Heart left ventricle (tissue), 16 donors: ENCODE measurements at regions of chr3 and their contacts with region 1.

Region 1: GRCh38 chr3:17645072-17645698 is 97.2 kb downstream of the TBC1D5 start:
- DNase-seq: peak in 1 of 5 donors; percentile 14
- ATAC-seq: peak in 3 of 4 donors; percentile 50 to 66 (median 53)
- H3K4me3 ChIP-seq: no peak overlapping the region
- H3K27ac ChIP-seq: no peak overlapping the region
- H3K4me1 ChIP-seq: peaks cover 0 to 23% (median 5%) of the 10 kb centered on the region in 12 donors
- H3K27me3 ChIP-seq: no peaks in the 10 kb centered on the region
- CTCF ChIP-seq: peak; percentile 48 to 80 (median 72)
- POLR2A ChIP-seq: no peak

Region 2: GRCh38 chr3:17623464-17623863 is 21.7 kb before region 1 on chr3:
- intact Hi-C with region 1: no loop called
- DNase-seq: no peak
- ATAC-seq: no peak
- H3K4me3 ChIP-seq: no peak overlapping the region
- H3K27ac ChIP-seq: no peak overlapping the region
- H3K4me1 ChIP-seq: peaks cover 0 to 14% (median 0%) of the 10 kb centered on the region in 12 donors
- H3K27me3 ChIP-seq: no peaks in the 10 kb centered on the region
- CTCF ChIP-seq: no peak
- POLR2A ChIP-seq: no peak

Region 3: GRCh38 chr3:17742108-17742879 is 97.1 kb after region 1 on chr3 and contains the start of gene TBC1D5:
- intact Hi-C with region 1: loop called in 4 of 10 experiments (anchors 2 to 10 kb)
- DNase-seq: peak; percentile 95 to 98 (median 98)
- ATAC-seq: peak; percentile 95 to 97 (median 96)
- H3K4me3 ChIP-seq: peak within 1 kb of the TSS; percentile 69 to 93 (median 84)
- H3K27ac ChIP-seq: peak within 1 kb of the TSS; percentile 93 to 100 (median 96)
- H3K4me1 ChIP-seq: peaks cover 0 to 53% (median 21%) of the 10 kb centered on the region in 12 donors
- H3K27me3 ChIP-seq: no peaks in the 10 kb centered on the region
- CTCF ChIP-seq: no peak
- POLR2A ChIP-seq: peak in 1 of 2 donors; percentile 76
- total RNA-seq, gene TBC1D5: 23.4 to 48.3 (median 31.7) TPM

Region 4: DNA sequence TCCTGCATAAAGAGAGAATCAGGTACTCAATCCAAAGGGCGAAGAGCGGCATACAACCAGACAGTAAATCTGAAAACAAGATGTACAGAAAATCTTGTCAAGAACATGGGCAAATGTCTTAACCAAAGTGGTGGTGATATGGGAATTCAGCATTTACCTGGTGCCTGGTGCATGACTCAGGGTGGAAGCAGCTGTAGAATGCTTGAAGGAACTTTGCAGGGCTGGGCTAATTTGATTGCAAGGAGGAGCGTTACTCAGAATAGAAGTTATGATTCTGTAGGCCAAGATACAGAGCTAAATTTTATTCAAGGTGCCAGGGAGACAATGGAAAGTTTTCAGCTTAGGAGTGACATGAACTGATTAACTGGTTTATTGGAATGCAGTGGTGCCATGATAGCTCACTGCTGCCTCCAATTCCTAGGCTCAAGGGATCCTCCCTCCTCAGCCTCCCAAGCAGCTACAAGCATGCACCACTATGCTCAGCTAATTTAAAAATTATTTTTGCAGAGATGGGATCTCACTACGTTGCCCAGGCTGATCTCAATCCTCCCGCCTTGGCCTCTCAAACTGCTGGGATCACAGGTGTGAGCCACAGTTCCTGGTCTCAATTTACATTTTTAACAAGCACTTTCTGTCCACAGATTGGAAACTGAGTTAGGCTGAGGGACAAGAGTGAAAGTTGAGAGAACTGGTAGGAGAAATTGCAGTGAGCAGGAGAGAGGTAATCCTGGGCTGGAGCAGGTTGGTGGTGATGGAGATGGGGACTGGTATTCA is 188.8 kb after region 1 on chr3:
- intact Hi-C with region 1: no loop called
- DNase-seq: no peak
- ATAC-seq: no peak
- H3K4me3 ChIP-seq: no peak overlapping the region
- H3K27ac ChIP-seq: no peak overlapping the region
- H3K4me1 ChIP-seq: no peaks in the 10 kb centered on the region
- H3K27me3 ChIP-seq: peaks cover 0 to 10% (median 0%) of the 10 kb centered on the region in 9 donors
- CTCF ChIP-seq: no peak
- POLR2A ChIP-seq: no peak

Region 5: DNA sequence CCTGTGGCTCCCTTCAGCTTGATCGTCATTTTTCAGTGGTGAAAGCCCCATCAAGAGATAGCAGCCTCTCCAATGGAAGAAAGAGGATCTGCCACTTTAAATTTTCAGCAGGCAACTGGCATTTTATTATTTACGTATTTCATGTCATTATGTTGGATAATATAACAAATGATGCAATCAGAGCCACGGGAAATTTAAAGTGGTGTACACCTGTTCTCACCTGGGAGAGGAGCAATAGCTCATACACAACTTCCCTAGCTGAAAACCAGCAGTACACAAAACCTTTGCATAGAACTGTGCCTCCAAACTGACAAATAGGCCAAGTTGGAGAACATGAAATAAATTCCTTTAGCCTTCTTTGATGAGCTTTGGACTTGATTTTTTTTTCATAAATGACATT is 643.1 kb after region 1 on chr3:
- intact Hi-C with region 1: no loop called
- DNase-seq: no peak
- ATAC-seq: no peak
- H3K4me3 ChIP-seq: no peak overlapping the region
- H3K27ac ChIP-seq: no peak overlapping the region
- H3K4me1 ChIP-seq: no peaks in the 10 kb centered on the region
- H3K27me3 ChIP-seq: no peaks in the 10 kb centered on the region
- CTCF ChIP-seq: no peak
- POLR2A ChIP-seq: no peak